Mucosa of descending colon (tissue), 3 donors: ENCODE measurements at regions of chr3 and their contacts with region 1.

Region 1: DNA sequence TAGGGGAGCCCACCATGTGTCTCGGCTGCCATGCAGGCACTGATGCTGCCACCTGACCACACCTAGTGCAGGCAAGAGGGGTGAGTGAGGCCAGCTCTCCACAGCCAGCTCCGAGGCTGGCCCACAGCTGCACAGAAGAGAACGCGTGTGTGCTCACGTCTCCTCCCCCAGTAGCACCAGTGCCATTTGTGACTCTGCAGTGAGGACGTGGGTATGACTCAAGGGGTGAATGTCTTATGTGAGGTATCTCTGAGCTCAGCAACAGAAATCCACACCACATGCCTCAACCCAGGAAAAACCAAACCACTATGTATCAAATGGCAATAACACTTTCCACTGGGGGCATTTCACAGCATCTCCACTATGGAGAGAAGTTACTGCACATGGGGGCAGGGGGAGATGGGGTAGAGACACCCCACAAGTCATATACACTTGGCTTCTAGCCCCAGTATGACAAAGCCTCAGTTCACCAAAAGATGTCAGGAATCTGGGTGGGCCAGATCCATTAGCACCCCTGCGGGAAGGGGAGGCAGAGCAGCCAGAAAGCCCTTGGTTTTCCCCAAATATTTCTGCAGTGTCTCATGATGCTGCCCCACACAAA is 87.6 kb downstream of the LRIG1 start:
- DNase-seq: no peak
- ATAC-seq: no peak
- H3K4me3 ChIP-seq: no peak overlapping the region
- H3K4me1 ChIP-seq: peaks cover 3% of the 10 kb centered on the region
- CTCF ChIP-seq: no peak

Region 2: GRCh38 chr3:66822186-66823008 is 409.1 kb after region 1 on chr3:
- intact Hi-C with region 1: loop called in 1 of 2 experiments (anchors 10 kb)
- DNase-seq: peak in 2 of 3 donors; percentile 61 to 90
- ATAC-seq: peak; percentile 92
- H3K4me3 ChIP-seq: no peak overlapping the region
- H3K4me1 ChIP-seq: no peaks in the 10 kb centered on the region
- CTCF ChIP-seq: peak; percentile 69